ENCODE measurements at regions of chr11 and their contacts with region 1.

Region 1: GRCh38 chr11:42840176-42840829 is 471.5 kb upstream of the API5 start:
- DNase-seq: no peak
- H3K4me3 ChIP-seq: no peak overlapping the region
- H3K4me3 Mint-ChIP-seq: no peak overlapping the region
- H3K27ac Mint-ChIP-seq: no peak overlapping the region
- H3K4me1 ChIP-seq: no peaks in the 10 kb centered on the region
- H3K4me1 Mint-ChIP-seq: no peaks in the 10 kb centered on the region
- H3K27me3 ChIP-seq: no peaks in the 10 kb centered on the region
- H3K27me3 Mint-ChIP-seq: no peaks in the 10 kb centered on the region
- CTCF ChIP-seq: no peak

Region 2: GRCh38 chr11:42593441-42593840 is 246.9 kb before region 1 on chr11:
- CTCF ChIA-PET with region 1: interaction called, 13 read pairs
- POLR2A ChIA-PET with region 1: no interaction called
- intact Hi-C with region 1: no loop called
- DNase-seq: no peak
- H3K4me3 ChIP-seq: no peak overlapping the region
- H3K4me3 Mint-ChIP-seq: no peak overlapping the region
- H3K27ac Mint-ChIP-seq: no peak overlapping the region
- H3K4me1 ChIP-seq: no peaks in the 10 kb centered on the region
- H3K4me1 Mint-ChIP-seq: no peaks in the 10 kb centered on the region
- H3K27me3 ChIP-seq: no peaks in the 10 kb centered on the region
- H3K27me3 Mint-ChIP-seq: peaks cover 3% of the 10 kb centered on the region
- CTCF ChIP-seq: no peak

Region 3: DNA sequence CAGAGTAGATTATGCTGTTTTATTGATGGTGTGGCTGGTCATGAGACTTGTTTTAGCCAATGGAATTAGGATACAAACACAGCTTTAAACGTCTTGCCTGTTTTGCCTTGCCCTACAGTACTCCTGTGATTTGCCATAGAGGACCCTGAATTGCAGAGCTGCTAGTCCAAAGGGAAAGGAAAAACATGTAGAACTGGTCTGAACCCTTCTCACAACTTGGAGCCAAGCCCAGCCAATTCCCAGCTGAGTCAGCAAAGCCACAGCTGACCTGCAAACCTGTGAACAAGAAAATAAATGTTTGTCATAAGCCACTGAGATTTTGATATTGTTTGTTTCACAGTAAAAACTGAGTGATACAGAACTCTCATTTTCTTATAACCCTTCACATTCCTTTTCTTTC is 110.9 kb after region 1 on chr11:
- CTCF ChIA-PET with region 1: no interaction called
- POLR2A ChIA-PET with region 1: no interaction called
- intact Hi-C with region 1: no loop called
- DNase-seq: no peak
- H3K4me3 ChIP-seq: no peak overlapping the region
- H3K4me3 Mint-ChIP-seq: no peak overlapping the region
- H3K27ac Mint-ChIP-seq: no peak overlapping the region
- H3K4me1 ChIP-seq: no peaks in the 10 kb centered on the region
- H3K4me1 Mint-ChIP-seq: no peaks in the 10 kb centered on the region
- H3K27me3 ChIP-seq: no peaks in the 10 kb centered on the region
- H3K27me3 Mint-ChIP-seq: no peaks in the 10 kb centered on the region
- CTCF ChIP-seq: no peak

Measured in Caco-2 (cell line).